Calu3 (cell line): ENCODE measurements at regions of chr2 and their contacts with region 1.

Region 1: DNA sequence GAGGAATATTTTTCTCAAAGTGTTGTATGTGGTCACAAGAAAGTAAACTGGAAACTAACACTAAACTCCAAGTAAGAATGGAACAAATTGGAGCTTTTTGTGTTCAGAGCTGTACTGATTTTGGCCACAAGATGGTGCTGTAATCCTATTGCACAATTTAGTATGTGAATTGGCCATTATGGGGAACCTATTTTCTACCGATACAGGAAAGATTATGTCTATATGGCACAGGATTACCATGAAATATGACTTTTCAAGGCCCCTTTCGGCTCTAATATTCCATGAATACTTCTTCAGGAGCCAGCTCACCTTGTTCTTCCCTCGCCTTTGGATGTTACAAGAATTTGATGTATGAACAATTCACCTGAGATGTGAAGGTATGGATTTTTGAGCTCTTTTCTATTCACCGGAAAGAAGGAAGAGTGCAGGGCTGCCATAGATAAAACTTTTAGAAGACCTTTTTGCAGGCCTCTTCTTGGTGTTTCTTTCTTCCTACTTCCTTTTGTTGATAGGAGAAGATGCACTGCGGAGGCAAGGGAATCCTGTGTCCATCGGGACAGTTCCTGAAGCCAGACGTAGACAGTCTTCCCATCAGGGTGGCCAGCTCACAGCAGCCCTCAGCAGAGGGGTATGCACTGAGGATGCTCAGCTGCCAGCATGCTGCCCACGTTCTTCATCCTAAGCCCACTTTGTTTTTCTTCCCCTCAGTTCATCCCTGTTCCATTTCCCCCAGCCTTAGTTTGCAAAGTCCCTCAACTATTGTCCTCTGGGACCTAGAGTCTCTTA is 13.3 kb downstream of the MRPL44 start:
- DNase-seq: peak; percentile 62
- H3K4me3 Mint-ChIP-seq: no peak overlapping the region
- H3K27ac Mint-ChIP-seq: no peak overlapping the region
- H3K4me1 Mint-ChIP-seq: no peaks in the 10 kb centered on the region
- H3K27me3 Mint-ChIP-seq: no peaks in the 10 kb centered on the region
- CTCF ChIP-seq: peak; percentile 73

Region 2: GRCh38 chr2:224284134-224284946 is 313.8 kb after region 1 on chr2:
- CTCF ChIA-PET with region 1: interaction called, 35 read pairs
- intact Hi-C with region 1: loop called (anchors 1 kb)
- DNase-seq: peak; percentile 39
- H3K4me3 Mint-ChIP-seq: no peak overlapping the region
- H3K27ac Mint-ChIP-seq: no peak overlapping the region
- H3K4me1 Mint-ChIP-seq: no peaks in the 10 kb centered on the region
- H3K27me3 Mint-ChIP-seq: no peaks in the 10 kb centered on the region
- CTCF ChIP-seq: peak; percentile 91

Region 3: DNA sequence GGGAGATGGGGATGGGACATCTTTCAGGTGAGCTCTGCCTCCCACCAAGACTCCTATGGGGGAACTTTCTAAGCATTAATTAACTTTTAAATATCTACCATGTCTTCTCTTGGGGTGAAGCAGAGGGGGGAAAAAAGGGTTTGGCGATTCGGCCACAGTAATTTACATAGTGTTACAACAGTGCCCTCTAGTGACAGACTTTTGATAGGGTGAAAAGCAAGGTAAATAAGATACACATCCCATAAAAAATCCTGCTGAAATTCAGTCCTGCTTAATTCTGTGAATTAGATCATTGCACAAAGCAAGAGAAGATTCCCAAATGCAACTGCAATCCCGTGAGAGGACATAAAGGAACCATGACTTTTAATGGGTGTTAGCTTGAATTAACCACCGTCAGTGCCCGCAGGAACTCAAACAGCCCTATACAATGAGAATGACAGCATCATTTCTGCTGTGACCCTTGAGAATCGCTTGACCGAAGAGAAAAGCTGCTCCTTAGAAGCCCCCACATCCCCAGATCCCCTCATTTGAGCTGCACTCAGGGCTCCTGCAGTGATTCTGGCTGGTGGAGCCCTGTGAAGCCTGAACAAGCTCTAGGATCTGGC is 398.6 kb after region 1 on chr2:
- CTCF ChIA-PET with region 1: no interaction called
- intact Hi-C with region 1: loop called (anchors 5 kb)
- DNase-seq: peak; percentile 26
- H3K4me3 Mint-ChIP-seq: no peak overlapping the region
- H3K27ac Mint-ChIP-seq: no peak overlapping the region
- H3K4me1 Mint-ChIP-seq: no peaks in the 10 kb centered on the region
- H3K27me3 Mint-ChIP-seq: no peaks in the 10 kb centered on the region
- CTCF ChIP-seq: peak; percentile 52